Posterior vena cava (tissue), 2 donors: ENCODE measurements at regions of chr6 and their contacts with region 1.

Region 1: DNA sequence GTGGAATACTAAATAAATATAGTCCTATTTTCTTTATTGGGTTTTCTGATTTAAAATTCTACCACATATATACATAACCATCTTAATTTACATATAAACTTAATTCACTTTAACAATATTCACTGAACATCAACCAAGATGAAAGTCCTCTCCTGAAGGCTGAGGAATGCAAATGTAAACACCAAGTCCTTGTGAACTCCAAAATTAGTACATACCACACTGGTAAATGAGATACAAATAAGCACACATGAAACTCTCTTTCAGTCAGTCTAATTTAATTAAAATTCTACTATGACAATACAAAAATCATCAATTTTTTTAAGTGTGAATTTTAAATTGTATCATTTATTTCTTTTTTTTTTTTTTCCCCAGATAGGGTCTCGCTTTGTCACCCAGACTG is 205.1 kb upstream of the RUNX2 start:
- DNase-seq: no peak

Region 2: DNA sequence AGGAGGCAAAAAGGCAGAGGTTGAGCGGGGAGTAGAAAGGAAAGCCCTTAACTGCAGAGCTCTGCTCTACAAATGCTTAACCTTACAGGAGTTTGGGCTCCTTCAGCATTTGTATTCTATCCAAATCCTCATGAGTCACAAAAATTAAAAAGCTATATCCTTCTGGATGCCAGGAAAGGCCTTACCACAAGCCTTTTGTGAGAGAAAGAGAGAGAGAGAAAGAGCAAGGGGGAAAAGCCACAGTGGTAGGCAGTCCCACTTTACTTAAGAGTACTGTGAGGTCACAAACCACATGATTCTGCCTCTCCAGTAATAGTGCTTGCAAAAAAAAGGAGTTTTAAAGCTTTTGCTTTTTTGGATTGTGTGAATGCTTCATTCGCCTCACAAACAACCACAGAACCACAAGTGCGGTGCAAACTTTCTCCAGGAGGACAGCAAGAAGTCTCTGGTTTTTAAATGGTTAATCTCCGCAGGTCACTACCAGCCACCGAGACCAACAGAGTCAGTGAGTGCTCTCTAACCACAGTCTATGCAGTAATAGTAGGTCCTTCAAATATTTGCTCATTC is 205.0 kb after region 1 on chr6 and contains the start of gene RUNX2:
- intact Hi-C with region 1: loop called in 1 of 2 experiments (anchors 5 kb)
- DNase-seq: no peak
- total RNA-seq, gene RUNX2: 0.83 to 1.00 TPM

Region 3: DNA sequence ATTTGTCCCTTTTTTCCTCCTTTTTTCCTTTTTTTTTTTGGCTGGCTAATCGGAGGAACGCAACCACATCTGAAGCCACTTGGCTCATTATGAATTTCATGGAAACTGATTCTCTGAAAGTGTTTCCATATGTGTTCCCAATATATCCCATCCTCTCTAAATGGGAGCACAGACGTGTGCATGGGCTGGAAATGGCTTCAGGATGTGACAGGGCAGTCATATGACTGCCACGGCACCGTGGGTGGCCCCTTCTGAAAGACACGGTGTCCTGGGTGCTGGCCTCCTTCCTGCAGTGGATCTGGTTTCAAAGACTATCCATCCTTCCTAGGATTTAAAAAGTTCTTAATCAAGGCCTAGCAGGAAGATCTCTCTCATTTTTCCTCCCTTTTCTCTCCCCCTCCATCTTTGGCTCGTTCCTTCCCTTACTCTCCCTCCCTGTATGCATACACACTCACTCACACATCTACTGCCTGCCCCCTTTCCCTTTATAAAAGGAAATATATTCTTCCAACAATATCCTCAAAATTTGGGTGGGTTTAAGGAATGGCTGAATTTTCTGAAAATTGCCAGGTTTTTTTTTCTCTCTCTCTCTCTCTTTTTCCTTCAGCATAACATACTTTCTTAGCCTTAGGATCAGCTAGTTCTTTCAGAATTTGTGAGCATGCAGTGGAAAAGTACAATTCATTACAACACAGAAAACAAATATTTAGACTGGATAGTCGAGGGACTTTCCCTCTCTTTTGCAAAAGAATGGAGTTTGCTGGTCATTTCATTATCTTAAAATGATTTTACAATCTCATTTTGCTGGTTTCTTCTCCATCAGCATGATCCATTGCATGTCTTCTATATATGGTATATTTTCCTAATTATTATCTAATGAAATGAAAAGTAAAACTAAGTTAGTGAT is 415.9 kb after region 1 on chr6:
- intact Hi-C with region 1: no loop called
- DNase-seq: no peak